ENCODE measurements at regions of chr11 and their contacts with region 1.

Region 1: GRCh38 chr11:44893846-44894617 is 56.7 kb downstream of the TP53I11 start:
- DNase-seq: peak; percentile 50 to 56 (median 54)
- H3K4me3 ChIP-seq: no peak overlapping the region
- H3K4me3 Mint-ChIP-seq: no peak overlapping the region
- H3K27ac ChIP-seq: no peak overlapping the region
- H3K27ac Mint-ChIP-seq: peak overlapping the region in 1 of 7 donors; percentile 17
- H3K4me1 ChIP-seq: no peaks in the 10 kb centered on the region
- H3K4me1 Mint-ChIP-seq: peaks cover 2 to 18% (median 12%) of the 10 kb centered on the region in 4 donors
- H3K27me3 ChIP-seq: no peaks in the 10 kb centered on the region
- H3K27me3 Mint-ChIP-seq: no peaks in the 10 kb centered on the region

Region 2: DNA sequence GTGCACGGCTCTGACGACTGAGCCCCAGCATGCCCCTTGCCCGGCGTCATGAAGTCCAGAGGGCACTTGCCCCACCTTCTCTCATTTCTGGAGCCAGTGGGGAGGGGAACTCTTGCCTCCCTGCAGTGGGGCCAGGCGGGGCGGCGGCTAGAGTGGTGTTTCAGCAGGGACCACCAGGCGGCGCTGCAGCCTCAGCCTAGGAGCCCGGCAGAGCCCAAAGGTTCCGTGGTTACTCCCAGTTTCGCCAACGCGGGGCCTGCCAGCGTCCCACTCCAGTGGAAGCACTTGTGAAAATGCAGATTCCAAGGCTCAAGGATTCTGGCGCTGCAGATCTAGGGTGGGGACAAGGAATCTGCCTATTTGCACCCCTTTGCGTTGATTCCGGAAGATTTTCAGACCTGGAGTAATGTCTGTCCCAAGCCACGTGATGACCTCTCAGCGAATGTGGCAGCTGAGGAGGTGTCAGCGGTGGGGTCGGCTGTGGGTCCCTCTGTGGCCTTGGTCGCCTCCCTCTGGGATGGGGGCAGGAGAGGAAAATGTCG is 272.8 kb before region 1 on chr11:
- CTCF ChIA-PET with region 1: interaction called, 25 read pairs
- POLR2A ChIA-PET with region 1: no interaction called
- intact Hi-C with region 1: loop called (anchors 1 kb)
- DNase-seq: peak; percentile 55 to 64 (median 57)
- H3K4me3 ChIP-seq: no peak overlapping the region
- H3K4me3 Mint-ChIP-seq: peak overlapping the region in 1 of 8 donors; percentile 25
- H3K27ac ChIP-seq: no peak overlapping the region
- H3K27ac Mint-ChIP-seq: peak overlapping the region in 5 of 7 donors; percentile 25 to 52 (median 41)
- H3K4me1 ChIP-seq: peaks cover 28% of the 10 kb centered on the region
- H3K4me1 Mint-ChIP-seq: peaks cover 18 to 62% (median 42%) of the 10 kb centered on the region in 4 donors
- H3K27me3 ChIP-seq: no peaks in the 10 kb centered on the region
- H3K27me3 Mint-ChIP-seq: no peaks in the 10 kb centered on the region

Region 3: GRCh38 chr11:45073685-45074141 is 179.7 kb after region 1 on chr11:
- CTCF ChIA-PET with region 1: no interaction called
- POLR2A ChIA-PET with region 1: no interaction called
- intact Hi-C with region 1: no loop called
- DNase-seq: no peak
- H3K4me3 ChIP-seq: no peak overlapping the region
- H3K4me3 Mint-ChIP-seq: peak overlapping the region in 1 of 8 donors; percentile 18
- H3K27ac ChIP-seq: no peak overlapping the region
- H3K27ac Mint-ChIP-seq: peak overlapping the region in 1 of 7 donors; percentile 82
- H3K4me1 ChIP-seq: peaks cover 6% of the 10 kb centered on the region
- H3K4me1 Mint-ChIP-seq: peaks cover 4 to 12% (median 8%) of the 10 kb centered on the region in 4 donors
- H3K27me3 ChIP-seq: no peaks in the 10 kb centered on the region
- H3K27me3 Mint-ChIP-seq: no peaks in the 10 kb centered on the region

Region 4: GRCh38 chr11:45142241-45143055 is 248.4 kb after region 1 on chr11:
- CTCF ChIA-PET with region 1: no interaction called
- POLR2A ChIA-PET with region 1: no interaction called
- intact Hi-C with region 1: no loop called
- DNase-seq: no peak
- H3K4me3 ChIP-seq: no peak overlapping the region
- H3K4me3 Mint-ChIP-seq: no peak overlapping the region
- H3K27ac ChIP-seq: no peak overlapping the region
- H3K27ac Mint-ChIP-seq: no peak overlapping the region
- H3K4me1 ChIP-seq: peaks cover 10% of the 10 kb centered on the region
- H3K4me1 Mint-ChIP-seq: peaks cover 5 to 16% (median 10%) of the 10 kb centered on the region in 4 donors
- H3K27me3 ChIP-seq: peaks cover 9% of the 10 kb centered on the region
- H3K27me3 Mint-ChIP-seq: peaks cover 5 to 9% of the 10 kb centered on the region in 2 donors

Measured in CD4-positive, alpha-beta memory T cell (primary cell).